Transverse colon (tissue), 4 donors: ENCODE measurements at regions of chr18 and their contacts with region 1.

Region 1: GRCh38 chr18:12819322-12819721 is 64.7 kb downstream of the PTPN2 start:
- DNase-seq: no peak
- H3K4me3 ChIP-seq: no peak overlapping the region
- H3K27ac ChIP-seq: no peak overlapping the region
- H3K4me1 ChIP-seq: peaks cover 0 to 11% (median 0%) of the 10 kb centered on the region in 4 donors
- H3K27me3 ChIP-seq: no peaks in the 10 kb centered on the region
- CTCF ChIP-seq: no peak
- EP300 ChIP-seq: no peak
- POLR2A ChIP-seq: no peak

Region 2: DNA sequence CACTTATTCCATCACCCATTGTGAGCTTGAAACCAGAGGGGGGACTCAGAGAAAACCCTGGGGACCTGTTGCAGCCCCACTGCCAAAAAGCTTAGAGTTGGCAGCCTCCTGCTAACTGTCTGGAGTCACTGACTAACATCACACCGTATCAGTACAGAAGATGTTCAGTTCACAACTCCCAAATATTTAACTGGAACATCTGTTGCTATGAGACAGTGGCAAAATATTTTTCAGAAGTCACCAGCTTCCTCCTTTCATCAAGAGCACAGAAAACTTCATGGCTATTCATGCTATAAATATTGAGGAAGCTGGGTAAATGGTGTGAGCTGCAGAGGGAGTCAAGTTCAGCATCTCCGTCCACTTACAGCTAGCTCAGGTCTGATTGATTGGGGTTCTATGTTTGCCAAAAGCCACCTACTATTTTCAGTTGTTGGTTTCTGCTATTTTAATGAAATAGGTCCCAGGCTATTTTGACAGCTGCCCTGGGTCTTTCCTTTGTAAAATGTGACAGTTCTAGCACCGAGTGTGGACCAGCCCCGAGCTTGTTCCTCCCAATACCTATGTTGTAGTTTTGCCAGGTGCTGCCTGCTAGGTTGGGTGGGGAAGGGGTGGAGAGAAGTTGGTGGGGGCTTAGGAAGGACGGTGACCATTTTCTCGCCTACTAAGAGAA is 501.5 kb before region 1 on chr18:
- in situ Hi-C with region 1: no loop called
- intact Hi-C with region 1: no loop called
- DNase-seq: no peak
- H3K4me3 ChIP-seq: no peak overlapping the region
- H3K27ac ChIP-seq: peak overlapping the region; percentile 57 to 85 (median 69)
- H3K4me1 ChIP-seq: peaks cover 4 to 50% (median 31%) of the 10 kb centered on the region in 4 donors
- H3K27me3 ChIP-seq: no peaks in the 10 kb centered on the region
- CTCF ChIP-seq: no peak
- EP300 ChIP-seq: no peak
- POLR2A ChIP-seq: no peak

Region 3: GRCh38 chr18:12750076-12750714 is 69.1 kb before region 1 on chr18:
- in situ Hi-C with region 1: loop called in 1 of 4 experiments (anchors 10 kb)
- intact Hi-C with region 1: no loop called
- DNase-seq: peak; percentile 40
- H3K4me3 ChIP-seq: no peak overlapping the region
- H3K27ac ChIP-seq: no peak overlapping the region
- H3K4me1 ChIP-seq: no peaks in the 10 kb centered on the region
- H3K27me3 ChIP-seq: no peaks in the 10 kb centered on the region
- CTCF ChIP-seq: no peak
- EP300 ChIP-seq: no peak
- POLR2A ChIP-seq: no peak